ENCODE measurements at regions of chr22 and their contacts with region 1.

Region 1: GRCh38 chr22:36856121-36856791 is 4.5 kb upstream of the NCF4 start:
- DNase-seq: peak; percentile 89 to 93 (median 91)
- H3K4me3 ChIP-seq: peak overlapping the region in 4 of 7 experiments; percentile 0 to 59 (median 23)
- H3K27ac ChIP-seq: no peak overlapping the region
- H3K4me1 ChIP-seq: peaks cover 6 to 66% (median 41%) of the 10 kb centered on the region in 4 experiments
- H3K27me3 ChIP-seq: peaks cover 0 to 1% (median 0%) of the 10 kb centered on the region in 5 experiments

Region 2: GRCh38 chr22:36536717-36537116 is 319.5 kb before region 1 on chr22:
- CTCF ChIA-PET with region 1: interaction called, 10 read pairs
- POLR2A ChIA-PET with region 1: no interaction called
- DNase-seq: no peak
- H3K4me3 ChIP-seq: no peak overlapping the region
- H3K27ac ChIP-seq: no peak overlapping the region
- H3K4me1 ChIP-seq: peaks cover 0 to under 1% (median 0%) of the 10 kb centered on the region in 4 experiments
- H3K27me3 ChIP-seq: peaks cover 0 to 3% (median 0%) of the 10 kb centered on the region in 5 experiments

Region 3: DNA sequence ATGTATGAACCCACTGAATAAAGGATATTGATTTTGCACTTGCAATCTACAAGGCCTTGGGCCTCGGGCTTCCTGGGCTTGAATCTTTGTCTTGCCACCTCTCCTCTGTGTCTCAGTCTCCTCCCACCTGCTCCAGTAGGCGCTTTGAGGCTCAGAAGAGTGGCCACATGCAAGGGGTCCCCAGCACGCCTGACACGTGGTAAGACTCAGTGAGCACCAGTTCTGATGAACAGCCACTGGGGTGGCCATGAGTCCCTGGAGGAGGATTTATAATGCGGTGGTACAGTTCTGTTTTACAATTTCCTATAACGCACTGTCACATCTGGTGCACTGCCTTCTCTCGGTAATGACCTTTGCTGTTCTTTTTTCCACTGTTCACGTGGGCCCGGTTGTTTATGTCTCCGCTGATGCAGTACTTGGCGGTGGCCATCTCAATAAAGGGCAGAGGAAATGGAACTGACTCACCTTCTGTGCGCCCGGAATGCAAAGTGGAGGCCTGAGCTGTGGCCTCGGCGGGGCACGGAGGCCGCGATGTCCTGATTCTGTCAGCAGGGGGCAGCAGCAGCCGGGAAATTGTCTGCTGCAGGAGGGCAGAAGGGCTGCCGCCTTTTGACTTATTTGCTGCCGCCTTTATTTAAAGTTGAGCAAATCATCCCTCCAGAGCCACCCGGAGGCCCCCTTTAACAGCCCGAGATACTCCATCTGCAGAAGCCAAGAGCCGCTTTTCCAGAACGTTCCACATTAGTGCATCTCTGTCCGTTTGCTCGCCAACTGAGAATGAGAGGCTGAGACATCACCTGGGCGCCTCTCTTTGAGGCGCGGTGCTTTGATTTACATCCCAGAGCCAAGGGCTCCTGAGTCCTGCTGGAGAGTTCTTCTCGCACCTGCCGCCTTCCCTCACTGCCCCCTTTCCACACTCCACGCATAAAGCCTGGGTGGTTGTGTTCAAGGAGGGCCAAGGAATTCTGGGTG is 74.3 kb before region 1 on chr22:
- CTCF ChIA-PET with region 1: interaction called, 46 read pairs
- POLR2A ChIA-PET with region 1: no interaction called
- DNase-seq: peak; percentile 79 to 90 (median 90)
- H3K4me3 ChIP-seq: no peak overlapping the region
- H3K27ac ChIP-seq: no peak overlapping the region
- H3K4me1 ChIP-seq: peaks cover 0 to 7% (median 3%) of the 10 kb centered on the region in 4 experiments
- H3K27me3 ChIP-seq: peaks cover 0 to 9% (median 6%) of the 10 kb centered on the region in 5 experiments

Region 4: GRCh38 chr22:36843299-36843698 is 13.0 kb before region 1 on chr22:
- CTCF ChIA-PET with region 1: interaction called, 17 read pairs
- POLR2A ChIA-PET with region 1: no interaction called
- DNase-seq: no peak
- H3K4me3 ChIP-seq: no peak overlapping the region
- H3K27ac ChIP-seq: no peak overlapping the region
- H3K4me1 ChIP-seq: peaks cover 3 to 8% (median 7%) of the 10 kb centered on the region in 4 experiments
- H3K27me3 ChIP-seq: no peaks in the 10 kb centered on the region

Region 5: DNA sequence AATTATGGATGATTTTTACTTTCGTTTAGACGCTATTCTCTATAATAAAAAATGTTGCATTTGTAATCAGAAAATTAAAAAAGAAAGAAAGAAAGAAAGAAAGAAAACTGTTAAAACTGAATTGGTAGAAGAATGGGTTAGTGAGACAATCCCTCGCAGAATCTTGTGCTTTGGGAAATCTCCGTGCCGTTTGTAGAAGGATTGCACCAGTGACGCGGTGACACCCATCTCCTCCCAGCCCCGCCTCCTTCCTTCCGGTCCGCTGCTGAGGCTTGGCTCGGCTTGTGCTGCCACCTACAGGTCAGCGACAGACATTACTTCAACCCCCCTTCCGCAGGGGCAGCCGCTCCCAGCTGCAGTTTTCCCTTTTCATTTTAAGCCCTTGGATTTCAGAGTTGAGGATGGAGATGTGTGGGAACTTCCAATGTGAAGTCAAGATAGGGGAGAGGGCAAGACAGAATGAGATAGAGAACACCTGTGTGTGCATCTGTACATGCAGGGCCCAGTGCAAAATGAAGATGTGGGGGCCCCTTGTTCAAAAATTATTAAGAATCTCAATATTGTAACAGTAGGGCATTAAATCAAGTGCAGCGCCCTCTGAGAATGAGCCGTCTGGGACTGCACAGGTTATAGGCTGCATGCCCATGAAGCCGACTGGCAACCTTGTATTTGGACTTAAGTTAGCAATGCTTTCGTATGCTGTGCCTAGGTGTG is 121.8 kb after region 1 on chr22:
- CTCF ChIA-PET with region 1: interaction called, 14 read pairs
- POLR2A ChIA-PET with region 1: interaction called, 4 read pairs
- DNase-seq: peak; percentile 86 to 92 (median 90)
- H3K4me3 ChIP-seq: peak overlapping the region in 6 of 7 experiments; percentile 57 to 82 (median 69)
- H3K27ac ChIP-seq: peak overlapping the region in 1 of 2 experiments; percentile 61
- H3K4me1 ChIP-seq: peaks cover 0 to 9% (median 7%) of the 10 kb centered on the region in 4 experiments
- H3K27me3 ChIP-seq: peaks cover 0 to 3% (median 0%) of the 10 kb centered on the region in 5 experiments

Measured in common myeloid progenitor, CD34-positive (primary cell).